A673 (cell line): ENCODE measurements at regions of chr22 and their contacts with region 1.

Region 1: DNA sequence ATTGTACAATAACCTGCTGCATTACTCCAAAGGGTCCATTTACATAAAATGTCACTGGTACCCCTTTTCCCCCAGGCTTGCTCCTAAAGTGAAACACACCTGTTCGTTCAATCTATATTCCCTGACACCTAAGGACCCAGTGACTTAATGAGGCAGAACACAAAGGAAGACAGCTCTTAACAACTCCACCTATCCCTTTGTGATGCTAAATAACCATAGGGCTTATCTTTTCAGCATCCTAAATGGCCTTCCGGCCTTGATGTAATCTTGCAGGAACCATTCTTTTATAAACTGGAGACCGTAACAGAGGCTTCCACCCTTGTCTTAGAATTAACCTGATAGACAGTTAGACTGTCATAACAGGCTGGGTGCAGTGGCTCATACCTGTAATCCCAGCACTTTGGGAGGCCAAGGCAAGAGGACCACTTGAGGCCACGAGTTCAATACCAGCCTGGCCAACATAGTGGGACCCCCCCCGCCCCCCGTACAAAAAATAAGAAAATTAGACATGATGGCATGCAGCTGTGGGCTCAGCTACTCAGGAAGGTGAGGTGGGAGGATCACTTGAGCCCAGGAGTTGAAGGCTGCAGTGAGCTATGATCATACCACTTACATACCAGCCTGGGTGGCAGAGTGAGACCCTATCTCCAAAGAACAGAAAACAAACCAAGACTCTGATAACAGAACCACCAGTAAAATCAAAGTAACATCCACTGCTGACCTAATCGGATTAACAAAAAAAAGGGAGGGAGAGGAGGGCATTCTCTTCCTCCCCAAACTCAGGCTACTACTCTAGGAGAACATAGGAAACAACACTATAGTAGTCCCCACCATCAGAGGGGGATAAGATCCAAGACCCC is 5.1 kb downstream of the CHEK2 start:
- DNase-seq: no peak
- H3K4me3 ChIP-seq: no peak overlapping the region
- H3K27ac ChIP-seq: no peak overlapping the region
- H3K4me1 ChIP-seq: no peaks in the 10 kb centered on the region
- H3K27me3 ChIP-seq: no peaks in the 10 kb centered on the region
- CTCF ChIP-seq: no peak

Region 2: DNA sequence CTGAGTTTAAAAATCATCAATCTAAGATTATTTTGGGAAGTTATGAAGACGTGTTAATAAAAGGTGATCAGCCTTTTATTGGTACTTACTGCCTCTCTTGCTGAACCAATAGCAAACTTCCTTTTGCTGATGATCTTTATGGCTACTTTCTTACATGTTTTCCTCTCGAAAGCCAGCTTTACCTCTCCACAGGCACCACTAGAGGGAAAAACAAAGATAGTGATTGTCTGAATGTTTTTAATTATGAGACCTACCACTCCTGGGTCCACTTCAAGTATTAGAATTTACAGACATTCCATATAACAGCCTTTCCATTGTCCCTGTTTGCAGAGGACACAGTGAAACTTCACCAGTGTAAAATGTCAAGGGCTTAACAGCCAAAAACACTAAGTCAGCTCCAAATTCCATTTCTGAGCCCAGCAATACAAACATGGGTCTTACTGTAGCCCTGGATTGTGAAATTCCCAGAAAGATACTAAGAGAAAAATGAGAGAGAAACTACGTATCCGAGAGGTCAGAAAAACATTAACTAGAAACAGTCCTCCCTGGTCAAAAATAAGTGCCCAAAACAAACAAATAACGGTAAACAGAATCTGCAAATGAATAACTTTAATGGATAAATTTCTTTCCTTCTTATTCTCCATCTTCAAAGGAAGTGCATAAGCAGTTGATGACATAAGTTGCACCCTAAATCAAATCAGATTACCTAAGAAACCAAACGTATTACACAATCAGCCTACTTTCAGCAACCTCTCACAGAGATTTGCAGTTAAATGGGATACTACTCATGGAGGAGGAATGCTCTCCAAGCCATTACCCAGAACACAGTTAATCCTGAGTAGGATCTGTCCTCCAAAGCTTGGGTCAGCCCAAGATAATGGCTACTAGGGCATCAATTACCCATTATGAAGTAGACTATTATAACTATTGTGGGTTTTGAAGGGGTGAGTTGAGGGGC is 24.4 kb before region 1 on chr22:
- CTCF ChIA-PET with region 1: no interaction called
- POLR2A ChIA-PET with region 1: no interaction called
- intact Hi-C with region 1: no loop called
- DNase-seq: peak; percentile 81
- H3K4me3 ChIP-seq: no peak overlapping the region
- H3K27ac ChIP-seq: peak overlapping the region; percentile 79
- H3K4me1 ChIP-seq: peaks cover 35% of the 10 kb centered on the region
- H3K27me3 ChIP-seq: no peaks in the 10 kb centered on the region
- CTCF ChIP-seq: no peak

Region 3: DNA sequence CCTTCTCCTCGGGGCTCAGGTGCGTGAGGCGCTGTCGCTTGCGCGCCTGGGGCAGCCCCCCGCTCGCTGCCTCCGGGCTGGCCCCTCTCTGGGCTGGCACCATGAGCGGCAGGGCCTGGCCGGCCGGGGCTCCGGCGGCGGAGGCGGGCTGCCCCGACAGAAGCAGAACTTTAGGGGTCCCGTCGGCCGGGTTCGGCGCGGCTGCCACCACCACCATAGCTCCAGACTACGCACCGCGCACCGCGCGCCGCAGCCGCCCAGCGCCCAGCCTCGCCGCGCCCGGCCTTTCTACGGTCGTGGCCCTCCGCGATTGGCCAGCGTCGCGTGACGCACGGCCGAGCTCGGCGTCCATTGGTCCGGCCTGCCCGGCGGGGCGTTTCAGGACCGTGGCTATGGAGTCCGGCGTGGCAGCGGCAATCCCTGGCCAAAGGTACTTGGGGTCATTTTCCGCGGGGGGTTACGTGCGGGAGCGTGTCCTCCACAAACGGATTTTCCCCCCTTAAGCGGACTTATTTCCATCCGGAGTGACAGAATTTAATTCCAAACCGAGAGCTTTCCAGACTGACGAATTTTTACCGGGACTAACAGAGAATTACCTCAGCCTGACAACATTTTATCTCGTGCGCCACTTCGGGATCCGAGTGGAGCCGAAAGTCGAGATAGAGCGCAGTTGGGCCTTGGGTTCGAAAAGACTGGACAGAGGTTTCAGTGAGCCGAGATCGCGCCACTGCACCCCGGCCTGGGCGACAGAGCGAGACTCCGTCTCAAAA is 64.0 kb after region 1 on chr22 and contains the start of gene XBP1:
- CTCF ChIA-PET with region 1: no interaction called
- POLR2A ChIA-PET with region 1: interaction called, 14 read pairs
- intact Hi-C with region 1: no loop called
- DNase-seq: peak; percentile 95
- H3K4me3 ChIP-seq: peak within 1 kb of the TSS; percentile 69
- H3K27ac ChIP-seq: peak within 1 kb of the TSS; percentile 99
- H3K4me1 ChIP-seq: peaks cover 17% of the 10 kb centered on the region
- H3K27me3 ChIP-seq: no peaks in the 10 kb centered on the region
- CTCF ChIP-seq: no peak
- total RNA-seq, gene XBP1: 65.4 and 66.3 TPM in 2 replicates